Activated naive CD4-positive, alpha-beta T cell treated with anti-CD3 and anti-CD28 coated beads for 36 hours (primary cell): ENCODE measurements at regions of chr11 and their contacts with region 1.

Region 1: GRCh38 chr11:128472128-128473089 is 114.9 kb downstream of the ETS1 start:
- DNase-seq: peak; percentile 86
- H3K4me3 Mint-ChIP-seq: peak overlapping the region; percentile 56
- H3K27ac Mint-ChIP-seq: peak overlapping the region; percentile 97
- H3K4me1 Mint-ChIP-seq: peaks cover 95% of the 10 kb centered on the region
- H3K27me3 Mint-ChIP-seq: no peaks in the 10 kb centered on the region

Region 2: DNA sequence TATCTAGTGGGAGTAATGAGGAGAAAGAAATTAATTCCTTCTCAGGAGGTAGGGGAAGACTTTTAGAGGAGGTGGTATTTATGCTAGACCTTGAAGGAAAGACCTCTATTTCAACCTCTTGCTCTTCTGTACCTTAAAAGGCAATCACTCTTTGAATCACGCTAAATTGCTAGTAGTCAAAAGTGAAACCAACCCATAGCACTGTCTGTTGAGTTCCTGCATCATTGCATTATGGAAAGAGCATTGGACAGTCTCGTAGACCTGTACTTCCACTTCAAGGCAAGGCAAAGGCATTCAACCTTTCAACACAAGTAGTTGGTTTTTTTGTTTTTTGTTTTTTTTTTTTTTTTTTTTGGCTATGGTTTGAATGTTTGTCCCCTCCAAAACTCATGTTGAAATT is 655.4 kb before region 1 on chr11:
- CTCF ChIA-PET with region 1: no interaction called
- intact Hi-C with region 1: no loop called
- DNase-seq: no peak
- H3K4me3 Mint-ChIP-seq: no peak overlapping the region
- H3K27ac Mint-ChIP-seq: no peak overlapping the region
- H3K4me1 Mint-ChIP-seq: no peaks in the 10 kb centered on the region
- H3K27me3 Mint-ChIP-seq: peaks cover 1% of the 10 kb centered on the region

Region 3: DNA sequence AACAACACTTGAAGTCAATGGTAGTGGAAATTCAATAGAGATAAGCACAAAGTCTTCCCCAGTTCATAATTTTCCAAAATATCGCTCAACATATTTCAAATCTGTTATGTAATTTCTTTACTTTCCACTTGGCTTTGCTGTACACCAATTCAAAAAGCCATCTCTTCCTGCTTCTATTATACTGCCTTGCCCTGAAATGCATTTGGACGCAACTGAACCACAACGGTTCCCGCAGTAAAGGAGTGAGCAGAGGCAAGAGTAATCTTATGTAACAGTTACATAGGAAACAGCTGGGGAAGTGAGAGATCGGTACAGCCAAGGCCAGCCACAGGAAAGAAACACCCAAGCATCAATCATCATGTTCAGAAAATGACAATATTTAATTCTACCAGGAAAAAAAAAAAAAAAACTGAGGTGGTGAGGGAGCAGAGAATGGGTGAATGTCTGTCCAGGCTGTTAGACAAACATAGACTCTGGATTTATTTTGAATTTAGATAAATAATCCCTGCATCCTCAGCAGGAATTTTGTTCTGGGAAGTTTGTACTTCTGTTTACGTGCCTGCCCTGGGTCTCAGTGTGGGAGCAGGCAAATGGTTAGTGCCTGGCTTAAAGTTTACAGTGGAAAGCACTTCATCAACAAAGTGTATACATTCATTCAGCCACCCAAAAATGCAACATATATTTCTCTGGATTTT is 277.2 kb before region 1 on chr11:
- CTCF ChIA-PET with region 1: no interaction called
- intact Hi-C with region 1: loop called (anchors 2 kb)
- DNase-seq: peak; percentile 77
- H3K4me3 Mint-ChIP-seq: peak overlapping the region; percentile 6
- H3K27ac Mint-ChIP-seq: peak overlapping the region; percentile 32
- H3K4me1 Mint-ChIP-seq: peaks cover 42% of the 10 kb centered on the region
- H3K27me3 Mint-ChIP-seq: no peaks in the 10 kb centered on the region

Region 4: GRCh38 chr11:128342511-128343134 is 129.8 kb before region 1 on chr11:
- CTCF ChIA-PET with region 1: interaction called, 4 read pairs
- intact Hi-C with region 1: loop called (anchors 1 kb)
- DNase-seq: peak; percentile 93
- H3K4me3 Mint-ChIP-seq: peak overlapping the region; percentile 73
- H3K27ac Mint-ChIP-seq: peak overlapping the region; percentile 89
- H3K4me1 Mint-ChIP-seq: peaks cover 93% of the 10 kb centered on the region
- H3K27me3 Mint-ChIP-seq: no peaks in the 10 kb centered on the region

Region 5: GRCh38 chr11:128492461-128492860 is 20.1 kb after region 1 on chr11:
- CTCF ChIA-PET with region 1: interaction called, 7 read pairs
- intact Hi-C with region 1: loop called (anchors 1 kb)
- DNase-seq: peak; percentile 39
- H3K4me3 Mint-ChIP-seq: peak overlapping the region; percentile 35
- H3K27ac Mint-ChIP-seq: peak overlapping the region; percentile 92
- H3K4me1 Mint-ChIP-seq: peaks cover 95% of the 10 kb centered on the region
- H3K27me3 Mint-ChIP-seq: no peaks in the 10 kb centered on the region

Region 6: GRCh38 chr11:128552783-128553661 is 80.6 kb after region 1 on chr11:
- CTCF ChIA-PET with region 1: interaction called, 3 read pairs
- intact Hi-C with region 1: loop called (anchors 1 kb)
- DNase-seq: peak; percentile 68
- H3K4me3 Mint-ChIP-seq: peak overlapping the region; percentile 19
- H3K27ac Mint-ChIP-seq: peak overlapping the region; percentile 95
- H3K4me1 Mint-ChIP-seq: peaks cover 59% of the 10 kb centered on the region
- H3K27me3 Mint-ChIP-seq: no peaks in the 10 kb centered on the region

Region 7: GRCh38 chr11:128587452-128587851 is 115.0 kb after region 1 on chr11 and contains the start of gene ETS1:
- CTCF ChIA-PET with region 1: no interaction called
- intact Hi-C with region 1: no loop called
- DNase-seq: no peak
- H3K4me3 Mint-ChIP-seq: no peak within 1 kb of the TSS
- H3K27ac Mint-ChIP-seq: no peak within 1 kb of the TSS
- H3K4me1 Mint-ChIP-seq: peaks cover 21% of the 10 kb centered on the region
- H3K27me3 Mint-ChIP-seq: no peaks in the 10 kb centered on the region
- total RNA-seq, gene ETS1: 336 to 338 TPM

Region 8: DNA sequence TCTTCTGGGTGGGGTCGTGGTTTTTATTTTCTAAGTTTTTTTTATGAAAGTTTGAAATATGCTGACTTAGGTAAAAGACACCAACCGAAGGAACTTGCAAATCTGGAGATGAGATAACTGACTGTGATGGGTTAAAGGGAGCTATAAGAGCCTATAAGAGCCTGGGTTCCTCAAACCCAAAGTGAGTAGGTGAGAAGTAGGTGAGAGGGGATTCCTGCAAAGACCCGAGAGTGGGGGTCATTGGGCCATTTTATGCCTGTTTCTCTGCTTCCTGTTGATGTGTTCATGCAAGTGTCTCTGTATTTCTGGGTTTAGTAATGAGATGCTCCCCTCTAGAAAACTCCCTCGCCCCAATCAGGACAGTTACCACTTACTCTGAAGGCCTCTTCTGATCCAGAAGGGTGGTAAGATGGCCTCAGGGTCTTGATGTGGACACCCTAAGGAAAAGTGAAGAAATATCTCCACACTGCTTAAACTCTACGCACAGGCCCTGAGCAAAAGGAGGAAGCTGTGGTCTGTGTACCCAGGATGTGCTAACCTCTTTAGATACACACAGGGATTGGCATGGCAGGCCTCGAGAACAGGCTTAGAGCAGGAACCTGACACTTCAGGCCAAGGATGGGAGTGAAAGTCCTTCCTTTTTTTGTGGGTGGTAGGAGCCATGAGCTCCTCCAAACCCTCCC is 223.3 kb after region 1 on chr11:
- CTCF ChIA-PET with region 1: no interaction called
- intact Hi-C with region 1: loop called (anchors 2 kb)
- DNase-seq: peak; percentile 58
- H3K4me3 Mint-ChIP-seq: peak overlapping the region; percentile 90
- H3K27ac Mint-ChIP-seq: peak overlapping the region; percentile 94
- H3K4me1 Mint-ChIP-seq: peaks cover 54% of the 10 kb centered on the region
- H3K27me3 Mint-ChIP-seq: peaks cover 7% of the 10 kb centered on the region